Aorta (tissue), 5 donors: ENCODE measurements at regions of chr5 and their contacts with region 1.

Region 1: DNA sequence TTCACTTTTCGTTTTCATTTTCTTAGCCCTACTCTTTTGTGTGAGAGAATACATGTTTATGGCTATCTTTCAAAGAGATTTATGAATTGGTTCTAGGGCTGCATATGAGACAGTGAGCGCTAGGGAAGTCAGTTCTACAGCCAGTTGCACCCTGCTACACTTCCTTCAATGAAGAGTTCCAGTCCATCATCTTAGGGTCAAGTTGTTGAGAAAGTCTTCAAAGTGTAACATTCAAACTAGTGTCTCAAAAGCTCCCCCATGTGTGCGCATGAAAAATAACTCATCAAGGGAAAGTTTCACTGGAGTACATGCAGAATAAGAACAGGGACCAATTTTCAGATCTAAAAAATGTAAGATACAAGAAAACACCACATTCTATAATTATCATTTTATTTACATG is 317.2 kb downstream of the DEPDC1B start:
- DNase-seq: no peak
- ATAC-seq: peak; percentile 48
- H3K4me3 ChIP-seq: no peak overlapping the region
- H3K27ac ChIP-seq: peak overlapping the region in 1 of 2 donors; percentile 21
- H3K4me1 ChIP-seq: peaks cover 9 to 15% of the 10 kb centered on the region in 2 donors
- H3K27me3 ChIP-seq: no peaks in the 10 kb centered on the region

Region 2: GRCh38 chr5:59810041-59810440 is 572.7 kb before region 1 on chr5:
- intact Hi-C with region 1: loop called (anchors 1 to 2 kb)
- DNase-seq: peak; percentile 81 to 92
- ATAC-seq: peak; percentile 77
- H3K4me3 ChIP-seq: peak overlapping the region in 1 of 2 donors; percentile 63
- H3K27ac ChIP-seq: no peak overlapping the region
- H3K4me1 ChIP-seq: peaks cover 0 to 3% of the 10 kb centered on the region in 2 donors
- H3K27me3 ChIP-seq: no peaks in the 10 kb centered on the region

Region 3: DNA sequence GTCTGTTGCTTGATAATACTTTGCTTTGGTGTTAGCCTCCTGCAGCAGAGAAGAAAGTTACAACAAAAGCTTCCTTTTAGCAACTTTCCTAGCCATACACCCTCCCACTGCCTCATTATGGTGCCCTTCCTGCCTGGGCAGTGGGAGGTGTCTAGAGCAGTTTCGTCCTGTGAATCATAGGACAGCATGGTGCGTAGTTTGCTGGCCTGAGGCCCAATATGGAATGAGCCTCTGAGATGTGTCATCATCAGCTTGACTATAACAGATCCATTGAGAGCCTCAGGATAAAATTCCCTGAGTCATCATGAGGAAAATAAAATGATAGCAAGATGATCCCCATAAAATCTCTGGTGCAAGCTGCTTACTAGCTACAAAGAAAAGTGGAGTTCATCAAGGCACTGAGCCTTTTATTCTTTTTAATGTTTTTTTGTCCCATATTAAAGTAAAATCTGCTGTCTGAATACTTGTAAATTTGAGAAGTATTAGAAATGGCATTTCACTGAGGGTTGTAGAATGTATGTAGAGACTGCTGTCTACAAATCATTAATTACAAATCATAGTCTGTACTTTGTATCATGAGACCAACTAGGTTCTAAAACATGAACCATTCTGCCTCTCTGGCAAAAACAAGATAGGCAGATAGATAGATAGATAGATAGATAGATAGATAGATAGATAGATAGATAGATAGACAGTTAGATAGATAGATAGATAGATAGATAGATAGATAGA is 186.2 kb before region 1 on chr5:
- intact Hi-C with region 1: loop called in 1 of 2 experiments (anchors 5 kb)
- DNase-seq: peak; percentile 69 to 76
- ATAC-seq: no peak
- H3K4me3 ChIP-seq: no peak overlapping the region
- H3K27ac ChIP-seq: no peak overlapping the region
- H3K4me1 ChIP-seq: no peaks in the 10 kb centered on the region
- H3K27me3 ChIP-seq: no peaks in the 10 kb centered on the region

Region 4: DNA sequence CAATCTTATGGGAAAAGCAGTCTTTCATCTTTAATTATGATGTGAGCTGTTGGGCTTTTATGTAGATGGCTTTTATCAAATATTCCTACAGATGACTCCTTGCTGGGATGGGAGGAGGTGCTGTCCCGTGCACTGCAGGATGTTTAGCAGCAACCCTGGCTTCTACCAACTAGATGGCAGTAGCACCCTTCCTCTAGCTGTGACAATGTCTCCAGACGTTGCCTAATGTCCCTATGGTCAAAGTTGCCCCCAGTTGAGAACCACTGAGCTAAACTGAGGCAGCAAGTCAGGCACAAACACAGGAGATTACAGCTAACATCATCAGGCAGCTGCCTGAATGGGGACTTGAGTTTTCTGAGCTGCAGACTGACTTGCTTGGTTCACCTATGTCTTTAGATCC is 87.3 kb before region 1 on chr5:
- intact Hi-C with region 1: loop called in 1 of 2 experiments (anchors 5 kb)
- DNase-seq: peak in 1 of 2 donors; percentile 63
- ATAC-seq: no peak
- H3K4me3 ChIP-seq: no peak overlapping the region
- H3K27ac ChIP-seq: no peak overlapping the region
- H3K4me1 ChIP-seq: no peaks in the 10 kb centered on the region
- H3K27me3 ChIP-seq: no peaks in the 10 kb centered on the region

Region 5: GRCh38 chr5:60586307-60586901 is 203.7 kb after region 1 on chr5:
- intact Hi-C with region 1: loop called (anchors 5 kb)
- DNase-seq: no peak
- ATAC-seq: no peak
- H3K4me3 ChIP-seq: no peak overlapping the region
- H3K27ac ChIP-seq: no peak overlapping the region
- H3K4me1 ChIP-seq: no peaks in the 10 kb centered on the region
- H3K27me3 ChIP-seq: no peaks in the 10 kb centered on the region